Posterior cingulate gyrus (tissue), 11 donors: ENCODE measurements at regions of chr7 and their contacts with region 1.

Region 1: GRCh38 chr7:112414855-112415490 is 35.3 kb upstream of the IFRD1 start:
- DNase-seq: no peak

Region 2: DNA sequence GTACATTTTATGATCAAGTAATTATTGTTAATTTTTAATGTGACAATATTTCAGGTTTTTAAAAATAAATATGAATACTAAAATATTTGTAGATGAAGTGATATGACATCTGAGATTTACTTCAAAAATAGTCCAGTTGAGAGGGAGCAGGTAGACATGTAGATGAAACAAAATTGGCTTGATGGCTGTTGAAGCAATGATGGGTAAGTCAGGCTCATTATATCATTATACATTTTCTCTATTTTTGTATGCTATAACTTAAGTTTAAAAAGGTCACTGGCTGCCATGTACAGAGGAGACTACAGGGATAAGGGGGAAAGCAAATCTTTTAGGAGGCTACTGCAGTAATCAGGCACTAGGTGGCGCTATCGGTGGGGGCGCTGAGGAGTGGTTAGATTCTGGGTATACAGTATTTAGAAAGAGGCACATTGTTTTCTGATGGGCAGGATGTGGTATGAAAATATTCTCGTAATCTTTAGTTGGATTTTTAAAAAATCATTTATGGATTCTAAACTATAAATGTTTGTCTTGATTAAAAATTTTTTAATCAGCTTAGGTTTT is 662.9 kb before region 1 on chr7:
- intact Hi-C with region 1: loop called (anchors 5 kb)
- DNase-seq: peak in 8 of 10 donors; percentile 60 to 95 (median 70)

Region 3: DNA sequence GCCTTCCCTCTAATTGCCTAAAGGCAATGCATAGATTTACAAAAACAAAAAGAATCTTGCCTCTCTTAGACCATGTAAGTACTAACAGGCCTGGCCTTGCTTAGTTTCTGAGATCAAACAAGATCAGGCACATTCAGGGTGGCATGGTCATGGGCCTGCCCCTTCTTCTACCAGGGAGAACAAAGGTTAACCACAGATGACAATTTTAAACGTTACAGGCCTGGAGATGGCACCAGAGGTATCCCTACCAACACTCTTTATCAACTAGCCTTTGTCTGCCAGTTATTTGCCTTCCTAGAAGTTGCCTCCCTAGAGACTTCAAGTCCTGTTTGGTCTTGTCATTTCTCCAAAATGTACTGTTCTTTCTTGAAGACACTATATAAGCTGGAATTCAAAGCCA is 461.4 kb before region 1 on chr7:
- intact Hi-C with region 1: loop called (anchors 10 kb)
- DNase-seq: peak in 1 of 10 donors; percentile 24

Region 4: GRCh38 chr7:112089551-112089950 is 325.4 kb before region 1 on chr7:
- intact Hi-C with region 1: no loop called
- DNase-seq: no peak

Region 5: GRCh38 chr7:112735261-112735660 is 320.3 kb after region 1 on chr7:
- intact Hi-C with region 1: no loop called
- DNase-seq: no peak

Region 6: DNA sequence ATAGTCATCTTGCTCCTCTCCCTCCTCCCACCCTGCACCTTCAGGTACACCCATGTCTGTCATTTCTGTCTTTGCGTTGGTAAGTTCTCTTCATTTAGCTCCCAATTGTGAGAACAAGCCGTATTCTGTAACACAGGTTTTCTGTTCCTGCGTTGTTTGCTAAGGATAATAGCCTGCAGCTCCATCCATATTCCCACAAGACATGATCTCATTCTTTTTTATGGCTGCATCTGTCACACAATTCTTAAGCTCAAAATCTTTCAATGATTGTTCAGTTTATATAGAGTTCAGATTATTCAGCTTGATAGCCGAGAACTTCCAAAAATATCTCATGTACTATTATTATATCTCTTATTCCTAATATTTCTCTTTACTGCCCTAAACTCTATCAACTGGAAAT is 391.2 kb after region 1 on chr7:
- intact Hi-C with region 1: no loop called
- DNase-seq: no peak